Endothelial cell of umbilical vein (primary cell): ENCODE measurements at regions of chr7 and their contacts with region 1.

Region 1: DNA sequence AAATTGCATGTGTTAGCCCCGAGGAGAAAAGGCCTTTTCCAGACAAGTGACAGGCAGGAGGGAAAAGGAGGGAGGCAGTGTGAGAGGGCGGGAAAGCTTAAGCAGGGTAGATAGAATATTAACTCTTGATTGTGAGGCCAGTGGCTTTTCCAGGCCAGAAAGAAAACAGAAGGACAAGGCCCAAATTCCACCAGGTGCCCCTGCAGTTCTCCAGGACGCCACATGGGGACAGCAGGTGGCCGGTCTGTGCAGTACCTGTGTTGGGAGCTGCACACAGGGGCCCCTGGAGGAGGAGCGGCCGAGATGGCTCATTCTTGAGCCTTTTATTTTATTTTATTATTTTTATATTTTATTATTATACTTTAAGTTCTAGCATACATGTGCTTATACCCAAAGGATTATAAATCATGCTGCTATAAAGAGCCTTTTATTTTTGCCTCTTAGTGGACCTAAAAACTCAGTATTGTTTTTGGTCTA is 141.3 kb upstream of the KLF14 start:
- DNase-seq: peak; percentile 40
- H3K4me3 ChIP-seq: no peak overlapping the region
- H3K27ac ChIP-seq: no peak overlapping the region
- H3K4me1 ChIP-seq: peaks cover 5% of the 10 kb centered on the region
- H3K27me3 ChIP-seq: no peaks in the 10 kb centered on the region
- CTCF ChIP-seq: peak; percentile 58 to 84
- POLR2A ChIP-seq: peak; percentile 35

Region 2: DNA sequence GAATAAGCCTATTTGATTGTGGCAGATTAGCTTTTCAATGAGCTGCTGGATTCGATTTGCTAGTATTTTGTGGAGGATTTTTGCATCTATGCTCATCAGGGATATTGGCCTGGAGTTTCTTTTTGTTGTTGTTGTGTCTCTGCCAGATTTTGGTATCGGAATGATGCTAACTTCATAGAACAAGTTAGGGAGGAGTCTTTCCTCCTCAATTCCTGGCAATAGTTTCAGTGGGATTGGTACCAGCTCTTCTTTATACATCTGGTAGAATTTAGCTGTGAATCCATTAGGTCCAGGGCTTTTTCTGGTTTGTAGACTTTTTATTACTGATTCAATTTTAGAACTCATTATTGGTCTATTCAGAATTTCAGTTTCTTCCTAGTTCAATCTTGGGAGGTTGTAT is 97.9 kb before region 1 on chr7:
- CTCF ChIA-PET with region 1: no interaction called
- POLR2A ChIA-PET with region 1: no interaction called
- dilution Hi-C with region 1: no loop called
- intact Hi-C with region 1: no loop called
- DNase-seq: no peak
- H3K4me3 ChIP-seq: no peak overlapping the region
- H3K27ac ChIP-seq: no peak overlapping the region
- H3K4me1 ChIP-seq: no peaks in the 10 kb centered on the region
- H3K27me3 ChIP-seq: peaks cover 10 to 37% of the 10 kb centered on the region in 2 experiments
- CTCF ChIP-seq: no peak
- POLR2A ChIP-seq: no peak

Region 3: GRCh38 chr7:130887182-130888016 is 12.1 kb after region 1 on chr7:
- CTCF ChIA-PET with region 1: interaction called, 23 read pairs
- POLR2A ChIA-PET with region 1: no interaction called
- dilution Hi-C with region 1: no loop called
- intact Hi-C with region 1: no loop called
- DNase-seq: peak; percentile 89
- H3K4me3 ChIP-seq: no peak overlapping the region
- H3K27ac ChIP-seq: peak overlapping the region; percentile 98
- H3K4me1 ChIP-seq: peaks cover 74% of the 10 kb centered on the region
- H3K27me3 ChIP-seq: no peaks in the 10 kb centered on the region
- CTCF ChIP-seq: no peak
- POLR2A ChIP-seq: peak; percentile 72